ENCODE measurements at regions of chrX and their contacts with region 1.

Region 1: DNA sequence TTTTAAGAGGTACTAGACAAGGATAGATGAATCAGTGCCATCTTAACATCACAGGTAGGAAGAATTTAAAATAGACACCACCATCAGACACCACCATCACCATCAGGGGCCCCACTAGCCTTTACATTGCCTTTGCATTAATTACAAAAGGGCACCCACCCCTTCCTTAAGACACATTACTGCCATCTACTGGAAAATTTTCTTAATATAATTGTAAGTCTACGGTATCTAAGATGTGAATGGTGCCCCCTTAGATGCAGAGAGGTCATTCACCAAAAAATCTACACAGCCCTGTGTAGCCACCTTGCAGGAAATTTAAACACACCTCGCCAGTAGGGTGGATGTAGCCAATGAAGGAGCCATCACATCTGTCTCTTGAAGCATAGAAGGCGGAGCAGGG is 184.1 kb downstream of the MID1IP1 start:
- DNase-seq: no peak
- ATAC-seq: peak; percentile 45
- H3K4me3 Mint-ChIP-seq: no peak overlapping the region
- H3K27ac Mint-ChIP-seq: no peak overlapping the region
- H3K4me1 Mint-ChIP-seq: no peaks in the 10 kb centered on the region
- H3K27me3 Mint-ChIP-seq: no peaks in the 10 kb centered on the region
- CTCF ChIP-seq: no peak

Region 2: DNA sequence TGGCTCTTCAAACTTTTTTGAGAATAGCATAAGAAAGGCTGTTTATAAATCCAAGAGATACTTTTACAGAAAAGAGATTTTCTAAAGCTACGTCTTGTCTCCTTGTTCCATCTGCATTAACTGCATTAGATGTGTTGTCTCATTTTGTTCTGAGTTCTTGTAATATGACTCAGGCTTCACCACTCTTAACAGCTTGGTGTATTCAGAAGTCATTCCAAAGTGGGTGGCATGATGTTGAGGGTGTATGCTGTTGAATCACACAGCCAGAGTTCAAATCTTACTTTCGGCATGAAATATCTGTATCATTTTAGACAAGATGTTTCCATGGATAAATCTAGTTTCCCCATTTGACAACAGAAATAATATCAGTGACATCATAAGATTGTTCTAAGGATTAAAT is 948.9 kb before region 1 on chrX:
- CTCF ChIA-PET with region 1: no interaction called
- POLR2A ChIA-PET with region 1: no interaction called
- intact Hi-C with region 1: no loop called
- DNase-seq: no peak
- ATAC-seq: no peak
- H3K4me3 Mint-ChIP-seq: no peak overlapping the region
- H3K27ac Mint-ChIP-seq: no peak overlapping the region
- H3K4me1 Mint-ChIP-seq: no peaks in the 10 kb centered on the region
- H3K27me3 Mint-ChIP-seq: no peaks in the 10 kb centered on the region
- CTCF ChIP-seq: no peak

Region 3: GRCh38 chrX:38754102-38754790 is 231.1 kb before region 1 on chrX:
- CTCF ChIA-PET with region 1: no interaction called
- POLR2A ChIA-PET with region 1: no interaction called
- intact Hi-C with region 1: loop called (anchors 1 kb)
- DNase-seq: no peak
- ATAC-seq: peak; percentile 58
- H3K4me3 Mint-ChIP-seq: no peak overlapping the region
- H3K27ac Mint-ChIP-seq: no peak overlapping the region
- H3K4me1 Mint-ChIP-seq: no peaks in the 10 kb centered on the region
- H3K27me3 Mint-ChIP-seq: no peaks in the 10 kb centered on the region
- CTCF ChIP-seq: no peak

Region 4: DNA sequence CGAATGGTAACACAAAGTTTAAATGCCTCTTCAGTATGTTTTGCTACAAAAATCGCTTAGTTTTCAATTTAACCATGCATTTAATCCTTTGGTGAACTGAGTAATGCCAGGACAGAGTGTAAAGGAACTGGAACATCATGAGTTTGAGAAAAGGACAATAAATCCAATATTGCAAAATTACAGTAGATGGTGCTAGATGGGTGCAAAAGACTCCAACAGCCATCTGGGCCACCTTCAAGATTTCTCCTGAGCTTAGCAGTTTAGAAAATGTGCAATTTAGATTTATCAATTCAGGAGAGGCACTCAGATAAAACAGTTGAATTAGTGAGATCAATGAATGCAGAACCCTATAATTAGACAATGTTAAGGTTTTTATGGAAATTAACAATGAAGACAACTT is 217.3 kb before region 1 on chrX:
- CTCF ChIA-PET with region 1: interaction called, 13 read pairs
- POLR2A ChIA-PET with region 1: no interaction called
- intact Hi-C with region 1: loop called (anchors 1 kb)
- DNase-seq: no peak
- ATAC-seq: no peak
- H3K4me3 Mint-ChIP-seq: no peak overlapping the region
- H3K27ac Mint-ChIP-seq: no peak overlapping the region
- H3K4me1 Mint-ChIP-seq: no peaks in the 10 kb centered on the region
- H3K27me3 Mint-ChIP-seq: no peaks in the 10 kb centered on the region
- CTCF ChIP-seq: no peak

Region 5: DNA sequence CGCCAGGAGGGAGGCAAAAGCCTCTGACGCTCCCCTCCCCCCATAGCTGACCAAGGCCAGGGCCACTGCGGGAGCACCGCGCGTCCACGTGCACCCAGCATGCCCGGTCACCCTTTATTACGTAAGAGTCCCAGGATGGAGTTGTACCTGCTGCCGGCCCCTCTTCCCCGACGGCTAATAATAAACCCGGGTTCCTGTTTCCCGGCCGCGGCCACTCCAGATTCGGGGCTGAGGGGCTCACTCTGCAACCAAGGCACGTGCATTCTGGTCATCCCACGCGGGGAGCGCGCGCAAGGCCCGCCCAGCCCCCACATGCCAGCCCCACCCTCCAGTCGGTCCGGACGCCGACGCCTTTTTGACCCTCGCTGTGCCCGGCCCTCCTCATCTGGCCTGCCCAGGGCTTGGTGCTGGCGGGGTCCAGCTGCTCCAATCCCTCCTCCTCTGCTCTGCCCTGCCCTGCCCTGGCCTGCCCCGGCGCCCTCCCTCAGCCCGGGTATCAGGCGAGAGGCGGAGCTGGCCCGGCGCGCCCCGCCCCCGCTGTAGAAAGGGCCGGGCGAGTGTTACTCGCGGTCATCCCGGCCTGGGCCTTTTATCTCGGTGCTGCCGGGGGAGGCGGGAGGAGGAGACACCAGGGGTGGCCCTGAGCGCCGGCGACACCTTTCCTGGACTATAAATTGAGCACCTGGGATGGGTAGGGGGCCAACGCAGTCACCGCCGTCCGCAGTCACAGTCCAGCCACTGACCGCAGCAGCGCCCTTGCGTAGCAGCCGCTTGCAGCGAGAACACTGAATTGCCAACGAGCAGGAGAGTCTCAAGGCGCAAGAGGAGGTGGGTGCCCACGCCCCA is 181.6 kb before region 1 on chrX:
- CTCF ChIA-PET with region 1: no interaction called
- POLR2A ChIA-PET with region 1: interaction called, 4 read pairs
- intact Hi-C with region 1: loop called (anchors 2 kb)
- DNase-seq: peak; percentile 55
- ATAC-seq: peak; percentile 63
- H3K4me3 Mint-ChIP-seq: peak overlapping the region; percentile 89
- H3K27ac Mint-ChIP-seq: peak overlapping the region; percentile 80
- H3K4me1 Mint-ChIP-seq: peaks cover 39% of the 10 kb centered on the region
- H3K27me3 Mint-ChIP-seq: no peaks in the 10 kb centered on the region
- CTCF ChIP-seq: no peak

Region 6: GRCh38 chrX:39242187-39242586 is 256.8 kb after region 1 on chrX:
- CTCF ChIA-PET with region 1: no interaction called
- POLR2A ChIA-PET with region 1: no interaction called
- intact Hi-C with region 1: loop called (anchors 5 kb)
- DNase-seq: no peak
- ATAC-seq: no peak
- H3K4me3 Mint-ChIP-seq: no peak overlapping the region
- H3K27ac Mint-ChIP-seq: no peak overlapping the region
- H3K4me1 Mint-ChIP-seq: peaks cover 7% of the 10 kb centered on the region
- H3K27me3 Mint-ChIP-seq: peaks cover 2% of the 10 kb centered on the region
- CTCF ChIP-seq: no peak

Measured in activated B cell treated with CpG ODN at 0.5 μM for 24 hours (primary cell).